CD8-positive, alpha-beta T cell (primary cell): ENCODE measurements at regions of chr2 and their contacts with region 1.

Region 1: GRCh38 chr2:108776475-108776874 is 10.1 kb upstream of the CCDC138 start:
- DNase-seq: no peak
- ATAC-seq: no peak
- H3K4me3 ChIP-seq: no peak overlapping the region
- H3K4me3 Mint-ChIP-seq: no peak overlapping the region
- H3K27ac ChIP-seq: no peak overlapping the region
- H3K27ac Mint-ChIP-seq: no peak overlapping the region
- H3K4me1 ChIP-seq: no peaks in the 10 kb centered on the region
- H3K4me1 Mint-ChIP-seq: no peaks in the 10 kb centered on the region
- H3K27me3 ChIP-seq: no peaks in the 10 kb centered on the region
- H3K27me3 Mint-ChIP-seq: no peaks in the 10 kb centered on the region
- CTCF ChIP-seq: no peak

Region 2: DNA sequence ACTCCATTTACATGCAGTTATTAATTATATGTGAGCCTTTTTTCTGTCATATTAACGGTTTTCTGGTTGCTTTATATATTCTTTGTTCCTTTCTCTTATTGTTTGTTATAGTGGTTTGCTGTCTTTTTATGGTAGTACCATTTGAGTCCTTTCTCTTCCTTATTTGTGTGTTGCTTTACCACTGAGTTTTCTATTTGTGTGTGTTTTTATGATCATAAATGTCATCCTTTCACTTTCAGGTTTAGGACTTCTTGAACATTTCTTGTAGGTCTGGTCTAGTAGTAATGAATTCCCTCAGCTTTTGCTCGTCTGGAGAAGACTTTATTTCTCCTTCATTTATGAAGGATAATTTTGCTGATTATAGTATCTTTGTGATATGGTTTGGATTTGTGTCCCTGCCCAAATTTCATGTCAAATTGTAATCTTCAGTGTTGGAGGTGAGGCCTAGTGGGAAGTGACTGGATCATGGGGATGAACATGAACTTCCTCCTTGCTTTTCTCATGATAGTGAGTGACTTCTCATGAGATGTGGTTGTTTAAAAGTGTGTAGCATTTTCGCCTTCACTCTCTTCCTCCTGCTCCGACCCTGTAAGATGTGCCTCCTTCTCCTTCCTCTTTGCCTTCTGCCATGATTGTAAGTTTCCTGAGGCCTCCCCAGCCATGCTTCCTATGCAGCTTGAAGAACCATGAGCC is 316.0 kb before region 1 on chr2:
- CTCF ChIA-PET with region 1: no interaction called
- POLR2A ChIA-PET with region 1: no interaction called
- intact Hi-C with region 1: loop called in 1 of 2 experiments (anchors 5 kb)
- DNase-seq: no peak
- ATAC-seq: no peak
- H3K4me3 ChIP-seq: no peak overlapping the region
- H3K4me3 Mint-ChIP-seq: peak overlapping the region; percentile 40
- H3K27ac ChIP-seq: peak overlapping the region in 1 of 2 experiments; percentile 4
- H3K27ac Mint-ChIP-seq: no peak overlapping the region
- H3K4me1 ChIP-seq: peaks cover 6% of the 10 kb centered on the region
- H3K4me1 Mint-ChIP-seq: peaks cover 72% of the 10 kb centered on the region
- H3K27me3 ChIP-seq: no peaks in the 10 kb centered on the region
- H3K27me3 Mint-ChIP-seq: no peaks in the 10 kb centered on the region
- CTCF ChIP-seq: no peak

Region 3: GRCh38 chr2:108477099-108477498 is 299.4 kb before region 1 on chr2:
- CTCF ChIA-PET with region 1: no interaction called
- POLR2A ChIA-PET with region 1: no interaction called
- intact Hi-C with region 1: loop called in 1 of 2 experiments (anchors 10 kb)
- DNase-seq: no peak
- ATAC-seq: no peak
- H3K4me3 ChIP-seq: no peak overlapping the region
- H3K4me3 Mint-ChIP-seq: no peak overlapping the region
- H3K27ac ChIP-seq: no peak overlapping the region
- H3K27ac Mint-ChIP-seq: peak overlapping the region; percentile 77
- H3K4me1 ChIP-seq: no peaks in the 10 kb centered on the region
- H3K4me1 Mint-ChIP-seq: peaks cover 2% of the 10 kb centered on the region
- H3K27me3 ChIP-seq: no peaks in the 10 kb centered on the region
- H3K27me3 Mint-ChIP-seq: no peaks in the 10 kb centered on the region
- CTCF ChIP-seq: no peak

Region 4: DNA sequence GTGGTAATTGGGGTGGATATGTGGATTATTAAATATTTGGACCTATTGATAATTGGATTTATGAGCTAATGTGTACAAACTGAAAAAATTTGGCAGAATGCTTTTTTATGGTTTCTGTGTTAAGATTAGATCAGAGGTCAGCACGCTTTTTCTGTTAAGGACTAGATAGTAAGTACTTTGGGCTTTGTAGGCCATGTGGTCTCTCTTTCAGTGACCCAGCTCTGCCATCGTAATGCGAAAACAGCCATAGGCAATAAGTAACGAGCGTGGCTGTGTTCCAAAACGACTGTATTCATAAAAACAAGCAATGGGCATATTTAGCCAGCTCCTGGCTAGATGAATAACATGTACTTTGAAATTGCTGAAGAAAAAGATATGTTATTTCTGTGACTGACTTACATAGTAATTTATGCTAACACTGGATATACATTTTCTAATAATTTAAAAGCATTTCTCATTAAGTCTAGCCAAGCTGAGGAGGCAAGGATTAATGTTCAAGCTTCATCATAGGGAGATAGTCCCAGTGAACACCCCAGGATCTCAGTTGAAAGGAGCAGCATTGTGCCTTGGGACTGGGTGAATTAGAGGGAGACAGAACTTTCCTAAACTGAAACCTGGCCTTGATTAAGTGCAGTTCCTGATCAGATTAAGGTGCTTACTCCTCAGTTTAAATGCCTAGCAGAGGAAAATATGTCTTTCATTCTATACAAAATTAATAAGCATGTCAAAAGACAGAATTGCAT is 30.1 kb after region 1 on chr2:
- CTCF ChIA-PET with region 1: no interaction called
- POLR2A ChIA-PET with region 1: no interaction called
- intact Hi-C with region 1: no loop called
- DNase-seq: no peak
- ATAC-seq: no peak
- H3K4me3 ChIP-seq: no peak overlapping the region
- H3K4me3 Mint-ChIP-seq: no peak overlapping the region
- H3K27ac ChIP-seq: no peak overlapping the region
- H3K27ac Mint-ChIP-seq: no peak overlapping the region
- H3K4me1 ChIP-seq: no peaks in the 10 kb centered on the region
- H3K4me1 Mint-ChIP-seq: no peaks in the 10 kb centered on the region
- H3K27me3 ChIP-seq: no peaks in the 10 kb centered on the region
- H3K27me3 Mint-ChIP-seq: no peaks in the 10 kb centered on the region
- CTCF ChIP-seq: no peak